ENCODE measurements at regions of chr10 and their contacts with region 1.

Region 1: DNA sequence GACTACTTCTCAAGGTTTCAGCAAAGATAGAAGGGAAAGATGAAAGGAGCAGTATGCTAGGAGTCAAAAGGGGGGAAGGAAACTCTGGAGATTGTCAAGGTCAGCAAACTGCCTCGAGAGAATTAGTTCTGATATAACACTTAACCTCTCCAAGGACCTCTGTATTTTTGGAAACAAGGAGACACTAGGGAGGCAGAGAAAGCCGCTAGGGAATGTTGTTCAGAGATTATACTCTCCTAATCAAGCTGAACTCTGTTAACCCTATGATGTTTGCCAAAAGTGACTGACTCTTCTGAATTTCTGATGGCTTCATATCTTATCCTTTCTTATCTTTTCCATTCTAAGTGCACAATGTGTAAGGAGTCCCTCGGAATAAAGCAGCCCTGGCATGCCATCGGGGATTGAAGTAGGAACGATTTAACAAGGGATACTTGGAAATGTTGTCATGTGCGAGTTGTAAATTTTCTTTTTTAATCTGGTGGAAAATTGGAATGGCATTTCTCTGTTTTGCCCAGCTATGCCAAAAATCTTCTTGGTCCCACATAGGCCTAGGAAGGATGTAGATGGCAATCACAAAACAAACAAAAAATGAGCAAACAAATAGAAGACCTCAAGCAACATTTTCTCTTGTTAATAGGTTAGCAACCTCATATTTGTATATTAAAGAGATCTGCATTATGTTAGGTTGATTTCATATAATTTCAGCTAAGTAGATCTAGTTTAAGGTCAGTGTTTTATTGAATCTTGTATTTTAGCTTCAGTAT is 27.3 kb downstream of the CREM start:
- DNase-seq: no peak
- H3K4me3 Mint-ChIP-seq: no peak overlapping the region
- H3K27ac Mint-ChIP-seq: no peak overlapping the region
- H3K4me1 Mint-ChIP-seq: peaks cover 36% of the 10 kb centered on the region
- H3K27me3 Mint-ChIP-seq: no peaks in the 10 kb centered on the region

Region 2: DNA sequence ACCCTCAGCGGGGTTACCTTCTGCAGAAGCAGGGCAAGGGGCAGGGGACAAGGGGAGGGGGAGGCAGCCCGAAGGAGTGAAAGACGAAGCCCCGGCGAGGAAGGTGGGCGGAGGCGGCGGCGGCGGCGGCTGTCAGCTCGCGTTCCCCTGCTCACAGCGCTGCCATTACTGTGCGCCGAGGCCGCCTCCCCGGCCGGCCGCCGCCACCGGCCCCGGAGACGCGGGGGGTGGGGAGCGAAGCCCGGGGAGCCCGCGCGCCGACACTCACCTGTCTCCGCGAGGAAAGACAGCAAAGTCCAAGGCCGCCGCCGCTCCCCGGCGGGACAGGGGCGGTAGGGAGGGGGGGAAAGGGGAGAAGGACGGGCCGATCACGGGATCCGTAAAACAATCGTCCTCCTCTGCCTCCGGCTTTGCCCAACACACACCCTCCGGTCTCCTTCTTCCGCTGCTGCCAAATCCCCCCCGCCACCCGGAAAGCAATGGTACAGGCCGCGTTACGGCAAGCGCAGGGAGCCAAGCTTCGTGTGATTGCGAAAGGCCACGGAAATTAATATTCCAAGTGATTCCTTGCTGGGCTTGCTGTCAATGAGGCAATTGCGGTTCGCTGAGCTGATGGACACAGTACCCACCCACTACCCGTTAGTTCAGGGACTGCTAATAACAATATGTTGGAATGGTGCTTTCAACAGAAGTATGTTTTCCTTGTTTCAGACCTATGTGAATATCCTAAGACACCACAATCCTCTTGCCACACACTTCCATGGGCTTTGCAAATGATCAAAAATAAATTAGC is 63.5 kb before region 1 on chr10 and contains the start of gene CUL2:
- CTCF ChIA-PET with region 1: no interaction called
- intact Hi-C with region 1: loop called (anchors 1 kb)
- DNase-seq: peak; percentile 94
- H3K4me3 Mint-ChIP-seq: peak within 1 kb of the TSS; percentile 90
- H3K27ac Mint-ChIP-seq: peak within 1 kb of the TSS; percentile 92
- H3K4me1 Mint-ChIP-seq: peaks cover 45% of the 10 kb centered on the region
- H3K27me3 Mint-ChIP-seq: no peaks in the 10 kb centered on the region
- total RNA-seq, gene CUL2: 35.3 to 36.9 TPM

Region 3: DNA sequence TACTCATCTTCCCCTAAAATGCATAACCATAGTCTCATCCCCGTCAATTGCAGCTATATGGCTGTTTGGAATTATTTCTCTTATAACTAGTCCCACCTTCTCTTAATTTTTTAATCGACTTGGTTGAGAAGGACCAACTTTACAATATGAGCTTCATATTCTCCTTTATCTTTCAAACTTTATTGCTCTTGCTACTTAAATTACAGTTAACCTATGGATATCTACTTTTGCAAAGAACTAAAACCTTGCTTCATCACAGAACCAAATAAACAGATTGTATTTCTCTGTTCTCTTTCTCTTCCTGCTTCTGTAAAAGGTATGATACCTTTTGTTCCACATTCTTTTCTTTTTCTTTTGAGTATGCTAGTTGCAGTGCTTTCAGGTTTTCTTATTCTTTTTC is 21.2 kb before region 1 on chr10:
- CTCF ChIA-PET with region 1: interaction called, 6 read pairs
- intact Hi-C with region 1: loop called (anchors 1 kb)
- DNase-seq: no peak
- H3K4me3 Mint-ChIP-seq: peak overlapping the region; percentile 65
- H3K27ac Mint-ChIP-seq: peak overlapping the region; percentile 80
- H3K4me1 Mint-ChIP-seq: peaks cover 62% of the 10 kb centered on the region
- H3K27me3 Mint-ChIP-seq: no peaks in the 10 kb centered on the region

Region 4: DNA sequence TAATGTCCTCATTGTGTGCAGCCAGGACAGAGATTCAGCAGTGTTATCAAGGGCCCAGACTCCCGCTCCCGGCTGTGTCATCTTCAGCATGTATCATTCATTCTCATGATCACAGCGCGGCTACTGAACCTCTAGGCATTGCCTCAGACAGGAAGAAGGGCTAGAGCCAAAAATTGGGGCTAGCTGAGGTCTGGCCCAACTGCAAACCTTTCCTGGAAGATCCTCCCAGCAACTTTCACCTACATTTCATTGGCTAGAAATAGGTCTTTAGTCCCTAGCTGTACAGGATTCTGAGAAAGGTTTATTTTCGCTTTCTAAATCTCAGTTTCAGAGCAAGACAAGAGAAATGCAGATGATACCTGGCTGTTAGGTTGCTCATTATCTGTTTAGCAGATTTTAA is 54.6 kb after region 1 on chr10:
- CTCF ChIA-PET with region 1: interaction called, 3 read pairs
- intact Hi-C with region 1: loop called (anchors 1 kb)
- DNase-seq: peak; percentile 70
- H3K4me3 Mint-ChIP-seq: peak overlapping the region; percentile 0
- H3K27ac Mint-ChIP-seq: peak overlapping the region; percentile 74
- H3K4me1 Mint-ChIP-seq: peaks cover 11% of the 10 kb centered on the region
- H3K27me3 Mint-ChIP-seq: no peaks in the 10 kb centered on the region

Region 5: DNA sequence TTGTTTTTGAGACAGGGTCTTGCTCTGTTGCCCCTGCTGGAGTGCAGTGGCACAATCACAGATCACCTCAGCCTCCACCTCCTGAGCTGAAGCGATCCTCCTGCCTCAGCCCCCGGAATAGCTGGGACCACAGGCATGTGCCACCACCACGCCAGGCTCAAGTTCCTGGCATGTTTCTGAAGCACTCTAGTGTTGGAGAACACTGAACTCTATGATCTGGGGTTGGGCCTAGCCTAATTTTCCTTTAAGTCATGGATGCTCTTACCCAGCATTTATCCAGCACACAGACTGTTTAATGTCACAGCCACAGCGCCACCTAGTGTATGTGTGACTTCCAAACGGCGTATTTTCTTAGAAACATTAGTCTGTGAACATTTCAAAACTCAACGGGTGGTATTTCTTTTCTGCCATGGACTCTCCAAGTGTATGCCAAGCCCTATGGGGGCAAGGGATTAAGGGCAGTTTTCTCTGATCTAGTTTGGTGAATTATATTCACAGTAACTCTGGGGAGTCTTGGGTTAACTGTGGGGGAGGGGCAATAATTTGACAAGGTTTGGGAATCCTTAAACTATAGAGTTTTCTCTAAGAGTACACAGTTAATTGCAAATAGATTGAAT is 64.5 kb after region 1 on chr10:
- CTCF ChIA-PET with region 1: interaction called, 3 read pairs
- intact Hi-C with region 1: loop called (anchors 1 kb)
- DNase-seq: peak; percentile 96
- H3K4me3 Mint-ChIP-seq: peak overlapping the region; percentile 47
- H3K27ac Mint-ChIP-seq: peak overlapping the region; percentile 74
- H3K4me1 Mint-ChIP-seq: peaks cover 32% of the 10 kb centered on the region
- H3K27me3 Mint-ChIP-seq: no peaks in the 10 kb centered on the region

Region 6: GRCh38 chr10:35251373-35252100 is 97.6 kb after region 1 on chr10:
- CTCF ChIA-PET with region 1: no interaction called
- intact Hi-C with region 1: no loop called
- DNase-seq: no peak
- H3K4me3 Mint-ChIP-seq: no peak overlapping the region
- H3K27ac Mint-ChIP-seq: no peak overlapping the region
- H3K4me1 Mint-ChIP-seq: no peaks in the 10 kb centered on the region
- H3K27me3 Mint-ChIP-seq: no peaks in the 10 kb centered on the region

Region 7: GRCh38 chr10:35341521-35341920 is 187.6 kb after region 1 on chr10:
- CTCF ChIA-PET with region 1: no interaction called
- intact Hi-C with region 1: loop called (anchors 1 kb)
- DNase-seq: no peak
- H3K4me3 Mint-ChIP-seq: no peak overlapping the region
- H3K27ac Mint-ChIP-seq: peak overlapping the region; percentile 11
- H3K4me1 Mint-ChIP-seq: peaks cover 74% of the 10 kb centered on the region
- H3K27me3 Mint-ChIP-seq: no peaks in the 10 kb centered on the region